Caco-2 (cell line): ENCODE measurements at regions of chr12 and their contacts with region 1.

Region 1: DNA sequence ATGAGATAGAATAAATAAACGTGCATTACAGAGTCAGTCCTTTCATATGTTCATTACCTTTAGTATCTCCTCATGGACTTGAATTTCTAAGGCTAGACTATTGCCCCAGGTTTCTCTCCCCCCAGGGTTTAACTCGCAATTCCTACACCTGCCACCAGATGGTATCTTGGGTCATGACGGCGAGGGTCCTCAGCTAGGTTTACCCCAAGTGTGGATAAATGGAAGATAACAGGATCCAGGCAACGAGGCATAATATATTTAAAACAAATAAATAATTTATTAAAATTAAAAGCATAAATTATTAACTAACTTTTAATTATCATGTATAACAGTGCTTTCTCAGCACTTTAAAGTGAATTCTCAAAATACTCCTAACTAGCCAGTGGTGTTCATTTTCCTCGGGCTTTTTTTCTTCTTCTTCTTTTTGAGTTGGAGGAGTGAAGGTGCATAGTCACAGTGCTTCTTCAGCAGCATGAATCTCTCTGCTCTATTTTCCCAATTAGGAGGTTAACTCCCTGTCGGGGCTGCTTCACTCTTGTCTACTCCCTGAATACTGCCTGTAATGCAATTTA is 243.5 kb upstream of the CAND1 start:
- DNase-seq: peak; percentile 47 to 70
- H3K4me3 ChIP-seq: no peak overlapping the region
- H3K4me3 Mint-ChIP-seq: no peak overlapping the region
- H3K27ac Mint-ChIP-seq: no peak overlapping the region
- H3K4me1 ChIP-seq: peaks cover 3% of the 10 kb centered on the region; the same call in 1 of the 2 replicates
- H3K4me1 Mint-ChIP-seq: peaks cover 7% of the 10 kb centered on the region
- H3K27me3 ChIP-seq: no peaks in the 10 kb centered on the region
- H3K27me3 Mint-ChIP-seq: peaks cover 15% of the 10 kb centered on the region
- CTCF ChIP-seq: peak; percentile 70 to 76

Region 2: DNA sequence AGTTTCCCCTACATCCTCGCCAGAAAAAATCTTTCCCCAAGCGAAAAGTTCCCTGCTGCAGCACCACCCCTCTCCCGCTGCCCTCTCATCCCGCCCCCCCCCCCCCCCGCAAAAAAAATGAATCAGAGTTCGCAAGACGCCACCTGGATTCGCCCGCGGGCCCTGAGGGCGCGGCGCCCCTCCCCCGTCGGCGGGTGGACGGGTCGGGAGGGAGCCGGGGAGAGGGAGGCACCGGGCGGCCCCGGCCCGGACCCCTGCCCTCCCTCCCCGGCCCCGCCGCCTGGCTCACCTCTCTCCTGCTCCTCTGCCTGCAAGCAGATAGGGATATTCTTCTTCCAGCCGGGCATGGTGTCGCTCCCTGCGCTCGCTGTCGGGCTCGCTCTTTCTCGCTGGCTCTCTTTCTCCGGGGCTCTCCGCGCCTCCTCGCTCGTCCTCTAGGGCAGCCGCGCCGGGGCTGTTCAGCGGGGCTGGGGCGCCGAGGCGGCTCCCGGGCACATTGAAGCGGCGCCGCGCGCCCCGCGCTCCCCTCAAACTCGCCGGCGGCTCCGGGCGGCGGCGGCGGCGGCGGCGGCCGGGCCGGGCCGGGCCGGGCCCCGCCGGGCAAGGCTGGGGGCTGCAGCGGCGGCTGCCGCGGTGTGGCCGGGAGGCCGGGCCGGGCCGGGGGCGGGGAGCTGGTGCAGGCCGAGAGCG is 43.3 kb after region 1 on chr12:
- CTCF ChIA-PET with region 1: no interaction called
- POLR2A ChIA-PET with region 1: no interaction called
- intact Hi-C with region 1: loop called (anchors 5 kb)
- DNase-seq: peak; percentile 45 to 53
- H3K4me3 ChIP-seq: peak overlapping the region; percentile 48
- H3K4me3 Mint-ChIP-seq: peak overlapping the region; percentile 90
- H3K27ac Mint-ChIP-seq: no peak overlapping the region
- H3K4me1 ChIP-seq: no peaks in the 10 kb centered on the region
- H3K4me1 Mint-ChIP-seq: peaks cover 9% of the 10 kb centered on the region
- H3K27me3 ChIP-seq: peaks cover 4% of the 10 kb centered on the region; the same call in 1 of the 2 replicates
- H3K27me3 Mint-ChIP-seq: peaks cover 33% of the 10 kb centered on the region
- CTCF ChIP-seq: no peak